Mammary epithelial cell (primary cell): ENCODE measurements at regions of chr1 and their contacts with region 1.

Region 1: GRCh38 chr1:95043141-95043980 is 29.4 kb downstream of the ALG14 start:
- DNase-seq: peak; percentile 65
- H3K4me3 ChIP-seq: no peak overlapping the region
- H3K27ac ChIP-seq: no peak overlapping the region
- H3K4me1 ChIP-seq: peaks cover 21% of the 10 kb centered on the region
- H3K27me3 ChIP-seq: no peaks in the 10 kb centered on the region
- CTCF ChIP-seq: peak; percentile 99

Region 2: DNA sequence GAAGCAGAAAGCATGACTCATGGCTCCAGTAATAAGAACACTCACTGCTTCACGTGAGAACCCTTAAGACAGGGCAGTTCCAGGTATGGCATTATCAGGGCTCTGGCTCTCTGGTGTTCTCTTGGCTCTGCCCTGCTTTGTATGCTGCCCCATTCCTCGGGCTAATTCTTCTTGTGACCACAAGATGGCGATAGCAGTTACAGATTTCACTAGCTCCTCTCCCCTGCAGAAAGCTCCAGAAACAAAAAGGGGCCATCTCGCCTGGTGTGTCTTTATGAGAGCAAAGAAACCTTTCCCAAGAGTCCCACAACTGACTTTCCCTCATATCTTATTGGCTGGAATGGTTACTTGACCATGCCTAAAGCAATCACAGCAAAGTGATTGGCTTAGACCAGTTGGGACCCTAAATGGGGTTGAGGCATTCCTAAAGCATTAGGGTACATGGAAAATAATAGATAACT is 561.9 kb before region 1 on chr1:
- CTCF ChIA-PET with region 1: interaction called, 5 read pairs
- dilution Hi-C with region 1: no loop called
- in situ Hi-C with region 1: no loop called
- intact Hi-C with region 1: loop called (anchors 1 kb)
- DNase-seq: peak; percentile 82
- H3K4me3 ChIP-seq: no peak overlapping the region
- H3K27ac ChIP-seq: no peak overlapping the region
- H3K4me1 ChIP-seq: no peaks in the 10 kb centered on the region
- H3K27me3 ChIP-seq: no peaks in the 10 kb centered on the region
- CTCF ChIP-seq: peak; percentile 83 to 90

Region 3: GRCh38 chr1:94541175-94542087 is 501.9 kb before region 1 on chr1 and contains the start of gene F3:
- CTCF ChIA-PET with region 1: no interaction called
- dilution Hi-C with region 1: no loop called
- in situ Hi-C with region 1: loop called in 1 of 2 experiments (anchors 25 kb)
- intact Hi-C with region 1: no loop called
- DNase-seq: peak; percentile 95
- H3K4me3 ChIP-seq: peak within 1 kb of the TSS; percentile 83 to 89 (median 87)
- H3K27ac ChIP-seq: peak within 1 kb of the TSS; percentile 89
- H3K4me1 ChIP-seq: peaks cover 31% of the 10 kb centered on the region
- H3K27me3 ChIP-seq: no peaks in the 10 kb centered on the region
- CTCF ChIP-seq: no peak
- total RNA-seq, gene F3: 994 to 1,649 TPM

Region 4: DNA sequence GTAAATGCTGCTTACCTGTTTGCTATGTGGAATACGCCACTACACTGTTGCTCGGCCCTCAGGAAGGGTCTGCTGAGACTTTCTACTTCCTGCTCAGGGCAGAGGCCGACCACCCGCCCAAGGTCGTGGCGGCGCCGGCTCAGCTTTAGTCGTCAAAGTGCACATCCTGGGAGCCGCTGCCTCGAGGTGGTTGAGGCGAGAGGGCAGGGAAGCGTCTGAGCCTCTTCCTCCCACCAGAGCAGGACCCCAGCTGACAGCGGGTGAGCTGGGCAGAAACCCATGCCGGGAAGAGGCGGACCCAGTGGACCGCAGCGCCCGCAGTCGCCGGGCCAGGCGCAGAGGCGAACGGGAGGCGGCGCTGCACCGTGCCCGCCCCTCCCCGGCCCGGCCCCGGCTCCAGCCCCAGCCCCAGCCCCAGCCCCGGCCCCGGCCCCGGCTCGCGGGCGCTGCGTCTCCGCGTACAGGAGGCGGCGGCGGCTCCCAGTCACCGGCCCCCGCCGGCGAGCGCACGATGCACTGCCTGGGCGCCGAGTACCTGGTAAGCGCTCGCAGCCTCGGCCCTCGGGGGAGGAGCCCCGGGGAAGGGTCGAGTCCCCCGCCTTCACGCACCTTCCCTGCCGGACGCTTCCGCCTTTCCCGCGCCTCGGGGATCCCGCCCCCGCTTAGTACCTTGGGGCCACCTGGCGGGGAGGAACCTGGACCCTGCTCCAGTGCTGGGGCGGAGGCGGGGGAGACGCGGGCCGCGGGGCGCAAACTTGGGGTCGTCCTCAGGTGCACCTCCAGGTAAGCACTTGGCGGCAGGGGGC is 223.2 kb before region 1 on chr1 and contains the start of gene SLC44A3:
- CTCF ChIA-PET with region 1: no interaction called
- dilution Hi-C with region 1: no loop called
- in situ Hi-C with region 1: no loop called
- intact Hi-C with region 1: loop called (anchors 1 kb)
- DNase-seq: peak; percentile 41
- H3K4me3 ChIP-seq: peak within 1 kb of the TSS; percentile 87 to 95 (median 92)
- H3K27ac ChIP-seq: peak within 1 kb of the TSS; percentile 39
- H3K4me1 ChIP-seq: peaks cover 22% of the 10 kb centered on the region
- H3K27me3 ChIP-seq: no peaks in the 10 kb centered on the region
- CTCF ChIP-seq: peak in 1 of 2 donors; percentile 35
- total RNA-seq, gene SLC44A3: 5.8 to 6.4 TPM

Region 5: GRCh38 chr1:94926915-94927404 is 116.4 kb before region 1 on chr1 and contains the start of gene CNN3:
- CTCF ChIA-PET with region 1: interaction called, 3 read pairs
- dilution Hi-C with region 1: no loop called
- in situ Hi-C with region 1: loop called in 1 of 2 experiments (anchors 10 kb)
- intact Hi-C with region 1: loop called (anchors 1 kb)
- DNase-seq: peak; percentile 92
- H3K4me3 ChIP-seq: peak within 1 kb of the TSS; percentile 75 to 83 (median 79)
- H3K27ac ChIP-seq: peak within 1 kb of the TSS; percentile 79
- H3K4me1 ChIP-seq: peaks cover 24% of the 10 kb centered on the region
- H3K27me3 ChIP-seq: no peaks in the 10 kb centered on the region
- CTCF ChIP-seq: no peak
- total RNA-seq, gene CNN3: 136 to 244 TPM

Region 6: GRCh38 chr1:95058974-95059373 is 15.6 kb after region 1 on chr1:
- CTCF ChIA-PET with region 1: no interaction called
- dilution Hi-C with region 1: no loop called
- in situ Hi-C with region 1: no loop called
- intact Hi-C with region 1: no loop called
- DNase-seq: no peak
- H3K4me3 ChIP-seq: no peak overlapping the region
- H3K27ac ChIP-seq: no peak overlapping the region
- H3K4me1 ChIP-seq: no peaks in the 10 kb centered on the region
- H3K27me3 ChIP-seq: no peaks in the 10 kb centered on the region
- CTCF ChIP-seq: no peak

Region 7: GRCh38 chr1:95233737-95234500 is 190.6 kb after region 1 on chr1 and contains the start of gene RWDD3:
- CTCF ChIA-PET with region 1: interaction called, 12 read pairs
- dilution Hi-C with region 1: no loop called
- in situ Hi-C with region 1: no loop called
- intact Hi-C with region 1: loop called (anchors 1 kb)
- DNase-seq: peak; percentile 89
- H3K4me3 ChIP-seq: peak within 1 kb of the TSS; percentile 96 to 99 (median 99)
- H3K27ac ChIP-seq: peak within 1 kb of the TSS; percentile 77
- H3K4me1 ChIP-seq: peaks cover 11% of the 10 kb centered on the region
- H3K27me3 ChIP-seq: no peaks in the 10 kb centered on the region
- CTCF ChIP-seq: peak; percentile 56 to 68
- total RNA-seq, gene RWDD3: 10.3 to 14.0 TPM